H1 (cell line): ENCODE measurements at regions of chr7 and their contacts with region 1.

Region 1: DNA sequence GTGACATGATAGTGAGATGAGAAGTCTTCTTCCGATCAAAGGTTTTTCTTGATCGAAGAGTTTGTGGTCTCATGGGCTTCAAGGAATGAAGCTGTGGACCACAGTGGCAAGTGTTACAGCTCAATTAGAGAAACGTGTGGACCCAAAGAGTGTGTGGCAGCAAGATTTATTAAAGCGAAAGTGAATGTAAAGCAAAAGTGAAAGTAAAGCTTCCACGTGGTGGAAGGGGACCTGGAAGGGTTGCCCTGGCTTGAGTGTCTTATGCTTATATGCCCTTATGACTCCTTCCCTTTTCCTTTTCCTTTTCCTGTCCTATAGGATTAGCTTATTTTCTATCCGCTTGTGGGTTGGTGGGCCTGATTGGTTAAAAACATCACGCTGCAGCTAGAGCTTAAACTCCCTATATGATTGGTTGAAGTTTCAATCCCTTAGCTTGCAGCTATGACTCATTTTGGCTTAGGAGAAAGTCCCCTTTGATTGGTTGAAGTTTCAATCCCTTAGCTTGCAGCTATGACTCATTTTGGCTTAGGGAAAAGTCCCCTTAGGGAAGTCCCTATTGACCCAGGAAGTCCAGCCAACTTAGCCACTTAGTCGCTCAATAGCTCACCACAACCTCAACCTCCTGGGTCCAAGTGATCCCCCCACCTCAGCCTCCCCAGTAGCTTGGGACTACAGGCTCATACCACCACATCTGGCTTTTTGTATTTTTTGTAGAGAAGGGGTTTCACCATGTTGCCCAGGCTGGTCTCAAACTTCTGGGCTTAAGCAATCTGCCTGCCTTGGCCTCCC is 34.7 kb downstream of the MRPS24 start:
- DNase-seq: no peak
- H3K4me3 ChIP-seq: no peak overlapping the region
- H3K27ac ChIP-seq: no peak overlapping the region
- H3K4me1 ChIP-seq: peaks cover 0 to 5% (median 3%) of the 10 kb centered on the region in 4 experiments; a peak in 3 of 7 replicates
- H3K27me3 ChIP-seq: no peaks in the 10 kb centered on the region
- CTCF ChIP-seq: no peak
- EP300 ChIP-seq: no peak
- POLR2A ChIP-seq: no peak
- RAD21 ChIP-seq: no peak

Region 2: GRCh38 chr7:43454936-43455518 is 379.6 kb before region 1 on chr7:
- CTCF ChIA-PET with region 1: interaction called, 15 read pairs
- POLR2A ChIA-PET with region 1: no interaction called
- DNase-seq: no peak
- H3K4me3 ChIP-seq: no peak overlapping the region
- H3K27ac ChIP-seq: no peak overlapping the region
- H3K4me1 ChIP-seq: peaks cover 0 to 3% (median 2%) of the 10 kb centered on the region in 4 experiments; a peak in 4 of 7 replicates
- H3K27me3 ChIP-seq: no peaks in the 10 kb centered on the region
- CTCF ChIP-seq: peak in 2 of 3 experiments; percentile 37 to 46; a peak in 2 of 4 replicates
- EP300 ChIP-seq: no peak
- POLR2A ChIP-seq: no peak
- RAD21 ChIP-seq: peak; percentile 68 to 71

Region 3: DNA sequence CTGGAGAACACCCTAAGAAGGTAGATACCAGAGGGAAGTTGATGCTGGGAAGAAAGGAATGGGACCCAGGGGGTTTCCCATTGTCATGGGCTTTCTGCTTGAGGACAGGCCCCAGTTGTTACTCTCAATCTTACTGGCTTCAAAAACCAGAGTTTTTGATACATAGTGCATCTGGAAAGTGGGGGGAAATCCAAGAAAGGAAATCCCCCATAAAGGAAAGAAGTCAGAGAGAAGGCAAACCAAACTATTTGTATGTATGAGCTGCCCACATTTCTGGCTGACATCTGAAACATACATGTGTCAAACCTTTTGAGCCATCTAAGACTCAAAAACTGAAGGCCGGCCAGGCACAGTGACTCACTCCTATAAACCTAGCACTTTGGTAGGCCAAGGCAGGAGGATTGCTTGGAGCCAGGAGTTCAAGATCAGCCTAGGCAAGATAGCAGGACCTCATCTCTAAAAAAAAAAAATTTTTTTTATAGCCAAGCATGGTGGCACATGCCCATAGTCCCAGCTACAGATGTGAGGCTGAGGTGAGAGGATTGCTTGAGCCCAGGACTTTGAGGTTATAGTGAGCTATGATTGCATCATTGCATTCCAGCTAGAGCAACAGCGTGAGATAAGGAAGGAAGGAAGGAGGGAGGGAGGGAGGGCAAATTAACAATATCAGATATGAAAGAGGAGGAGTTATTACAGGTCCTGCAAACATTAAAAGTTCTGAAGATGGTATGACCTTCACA is 98.7 kb before region 1 on chr7:
- CTCF ChIA-PET with region 1: interaction called, 11 read pairs
- POLR2A ChIA-PET with region 1: no interaction called
- DNase-seq: no peak
- H3K4me3 ChIP-seq: no peak overlapping the region
- H3K27ac ChIP-seq: no peak overlapping the region
- H3K4me1 ChIP-seq: no peaks in the 10 kb centered on the region
- H3K27me3 ChIP-seq: no peaks in the 10 kb centered on the region
- CTCF ChIP-seq: no peak
- EP300 ChIP-seq: no peak
- POLR2A ChIP-seq: no peak
- RAD21 ChIP-seq: no peak

Region 4: GRCh38 chr7:43764039-43764761 is 70.5 kb before region 1 on chr7:
- CTCF ChIA-PET with region 1: interaction called, 11 read pairs
- POLR2A ChIA-PET with region 1: no interaction called
- DNase-seq: peak in 1 of 2 experiments; percentile 28
- H3K4me3 ChIP-seq: no peak overlapping the region
- H3K27ac ChIP-seq: no peak overlapping the region
- H3K4me1 ChIP-seq: peaks cover 0 to 9% (median 7%) of the 10 kb centered on the region in 4 experiments; a peak in 5 of 7 replicates
- H3K27me3 ChIP-seq: peaks cover 0 to 6% (median under 1%) of the 10 kb centered on the region in 4 experiments; a peak in 1 of 7 replicates
- CTCF ChIP-seq: no peak
- EP300 ChIP-seq: no peak
- POLR2A ChIP-seq: no peak
- RAD21 ChIP-seq: no peak

Region 5: GRCh38 chr7:43791665-43792064 is 43.0 kb before region 1 on chr7:
- CTCF ChIA-PET with region 1: interaction called, 15 read pairs
- POLR2A ChIA-PET with region 1: no interaction called
- DNase-seq: no peak
- H3K4me3 ChIP-seq: no peak overlapping the region
- H3K27ac ChIP-seq: no peak overlapping the region
- H3K4me1 ChIP-seq: no peaks in the 10 kb centered on the region
- H3K27me3 ChIP-seq: no peaks in the 10 kb centered on the region
- CTCF ChIP-seq: no peak
- EP300 ChIP-seq: no peak
- POLR2A ChIP-seq: no peak
- RAD21 ChIP-seq: no peak

Region 6: GRCh38 chr7:43850348-43851116 is 15.9 kb after region 1 on chr7:
- CTCF ChIA-PET with region 1: interaction called, 17 read pairs
- POLR2A ChIA-PET with region 1: no interaction called
- DNase-seq: no peak
- H3K4me3 ChIP-seq: no peak overlapping the region
- H3K27ac ChIP-seq: no peak overlapping the region
- H3K4me1 ChIP-seq: no peaks in the 10 kb centered on the region
- H3K27me3 ChIP-seq: no peaks in the 10 kb centered on the region
- CTCF ChIP-seq: no peak
- EP300 ChIP-seq: no peak
- POLR2A ChIP-seq: no peak
- RAD21 ChIP-seq: no peak